Activated CD4-positive, alpha-beta memory T cell treated with anti-CD3 and anti-CD28 coated beads, Interleukin-2, amount 10 ng/mL, durations not matched to agents 7 days and 5 days (primary cell): ENCODE measurements at regions of chr17 and their contacts with region 1.

Region 1: GRCh38 chr17:42997984-42998938 is at the start of gene RPL27:
- DNase-seq: peak; percentile 98
- H3K4me3 Mint-ChIP-seq: peak within 1 kb of the TSS; percentile 94
- H3K27ac Mint-ChIP-seq: peak within 1 kb of the TSS; percentile 96
- H3K4me1 Mint-ChIP-seq: peaks cover 35% of the 10 kb centered on the region
- H3K27me3 Mint-ChIP-seq: no peaks in the 10 kb centered on the region
- total RNA-seq, gene RPL27: 880 to 892 TPM

Region 2: DNA sequence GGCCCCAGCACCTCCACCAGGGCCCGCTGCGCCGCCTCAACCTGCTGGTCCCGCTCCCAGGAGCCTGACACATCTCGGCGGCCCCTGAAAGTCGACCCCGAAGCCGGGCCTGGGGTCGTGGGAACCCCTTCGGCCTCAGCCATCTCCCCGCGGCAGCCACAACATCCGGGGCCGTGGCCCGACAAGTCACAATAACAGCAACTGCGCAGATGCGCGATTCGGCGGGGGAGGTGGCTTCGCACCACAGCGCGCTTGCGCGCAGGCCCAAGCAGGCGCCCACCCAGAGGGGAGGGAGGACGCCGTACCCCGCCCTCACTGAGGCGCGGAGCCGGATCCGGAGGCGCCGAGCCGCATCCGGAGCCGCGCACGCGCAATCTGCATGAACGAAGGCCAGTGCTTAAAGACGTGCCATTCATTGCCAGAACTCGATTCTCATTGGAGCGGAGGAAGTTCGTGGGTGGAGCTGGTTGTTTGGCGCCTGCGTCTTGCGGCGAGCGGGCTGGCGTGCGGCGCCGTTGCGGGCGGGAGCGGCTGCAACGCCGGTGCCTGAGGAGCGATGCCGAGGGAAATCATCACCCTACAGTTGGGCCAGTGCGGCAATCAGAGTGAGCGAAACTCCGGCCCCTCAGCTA is 389.0 kb before region 1 on chr17 and contains the starts of genes RETREG3 and TUBG1:
- CTCF ChIA-PET with region 1: no interaction called
- POLR2A ChIA-PET with region 1: interaction called, 13 read pairs
- DNase-seq: peak; percentile 99
- H3K4me3 Mint-ChIP-seq: peak within 1 kb of the TSS; percentile 99
- H3K27ac Mint-ChIP-seq: peak within 1 kb of the TSS; percentile 91
- H3K4me1 Mint-ChIP-seq: peaks cover 42% of the 10 kb centered on the region
- H3K27me3 Mint-ChIP-seq: no peaks in the 10 kb centered on the region
- total RNA-seq, gene RETREG3: 73.9 to 75.5 TPM
- total RNA-seq, gene TUBG1: 53.3 to 56.3 TPM

Region 3: GRCh38 chr17:42832974-42833766 is 165.1 kb before region 1 on chr17 and contains the start of gene PSME3:
- CTCF ChIA-PET with region 1: interaction called, 7 read pairs
- POLR2A ChIA-PET with region 1: interaction called, 29 read pairs
- DNase-seq: peak; percentile 91
- H3K4me3 Mint-ChIP-seq: peak within 1 kb of the TSS; percentile 89
- H3K27ac Mint-ChIP-seq: peak within 1 kb of the TSS; percentile 92
- H3K4me1 Mint-ChIP-seq: peaks cover 26% of the 10 kb centered on the region
- H3K27me3 Mint-ChIP-seq: peaks cover 9% of the 10 kb centered on the region
- total RNA-seq, gene PSME3: 101 to 104 TPM

Region 4: GRCh38 chr17:43024407-43025289 is 26.4 kb after region 1 on chr17 and contains the start of gene RND2:
- CTCF ChIA-PET with region 1: interaction called, 4 read pairs
- POLR2A ChIA-PET with region 1: interaction called, 22 read pairs
- DNase-seq: peak; percentile 76
- H3K4me3 Mint-ChIP-seq: peak within 1 kb of the TSS; percentile 66
- H3K27ac Mint-ChIP-seq: peak within 1 kb of the TSS; percentile 4
- H3K4me1 Mint-ChIP-seq: peaks cover 24% of the 10 kb centered on the region
- H3K27me3 Mint-ChIP-seq: peaks cover 19% of the 10 kb centered on the region
- total RNA-seq, gene RND2: not detected

Region 5: GRCh38 chr17:43140396-43141332 is 142.4 kb after region 1 on chr17:
- CTCF ChIA-PET with region 1: no interaction called
- POLR2A ChIA-PET with region 1: no interaction called
- DNase-seq: no peak
- H3K4me3 Mint-ChIP-seq: no peak overlapping the region
- H3K27ac Mint-ChIP-seq: no peak overlapping the region
- H3K4me1 Mint-ChIP-seq: peaks cover 10% of the 10 kb centered on the region
- H3K27me3 Mint-ChIP-seq: no peaks in the 10 kb centered on the region

Region 6: DNA sequence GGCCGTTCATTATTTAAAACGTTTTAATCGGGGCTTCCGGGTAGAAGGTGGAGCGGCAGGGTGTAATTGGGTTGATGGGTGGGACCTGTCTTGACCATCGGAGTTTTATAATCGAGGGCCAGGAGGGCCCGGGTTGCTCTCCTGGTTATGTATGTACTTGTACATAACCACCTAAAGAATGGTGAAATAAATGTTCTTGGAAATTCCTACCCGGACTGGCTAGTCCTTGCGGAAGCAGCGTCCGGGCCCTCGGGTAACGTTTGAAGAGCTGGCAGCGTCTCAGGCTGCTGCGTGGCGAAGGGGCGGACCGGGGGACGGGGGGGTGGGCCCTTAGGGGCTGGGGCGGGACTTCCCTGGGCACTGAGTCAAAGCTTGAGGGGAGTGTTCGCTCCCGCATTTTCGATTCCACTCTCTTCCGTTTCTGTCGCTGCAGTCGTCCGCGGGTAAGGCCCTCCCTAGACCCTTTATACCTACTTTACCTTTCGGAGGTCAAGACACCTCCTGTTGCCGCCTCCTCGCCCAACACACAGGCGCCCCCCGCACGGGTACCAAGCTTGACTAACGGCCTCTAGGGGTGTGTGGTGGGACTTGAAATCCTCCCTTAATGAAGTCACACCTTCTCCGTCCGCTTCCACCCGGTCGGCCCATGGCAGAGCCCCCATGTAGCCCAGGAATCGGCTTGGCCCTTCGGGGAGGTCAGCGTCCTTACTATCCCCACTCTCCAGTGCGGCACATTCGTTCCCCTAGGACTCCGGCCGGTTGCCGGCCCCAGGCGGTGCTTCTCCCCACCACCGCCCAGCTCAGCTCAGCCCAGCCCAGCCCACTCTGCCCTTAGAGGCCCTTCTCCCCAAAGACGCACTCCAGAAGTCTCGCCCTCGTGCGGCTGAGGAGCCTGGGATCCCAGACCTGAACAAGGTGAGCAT is 213.5 kb after region 1 on chr17 and contains the start of gene TMEM106A:
- CTCF ChIA-PET with region 1: interaction called, 4 read pairs
- POLR2A ChIA-PET with region 1: interaction called, 12 read pairs
- DNase-seq: peak; percentile 80
- H3K4me3 Mint-ChIP-seq: peak within 1 kb of the TSS; percentile 81
- H3K27ac Mint-ChIP-seq: peak within 1 kb of the TSS; percentile 82
- H3K4me1 Mint-ChIP-seq: peaks cover 31% of the 10 kb centered on the region
- H3K27me3 Mint-ChIP-seq: no peaks in the 10 kb centered on the region
- total RNA-seq, gene TMEM106A: 12.9 to 13.8 TPM

Region 7: DNA sequence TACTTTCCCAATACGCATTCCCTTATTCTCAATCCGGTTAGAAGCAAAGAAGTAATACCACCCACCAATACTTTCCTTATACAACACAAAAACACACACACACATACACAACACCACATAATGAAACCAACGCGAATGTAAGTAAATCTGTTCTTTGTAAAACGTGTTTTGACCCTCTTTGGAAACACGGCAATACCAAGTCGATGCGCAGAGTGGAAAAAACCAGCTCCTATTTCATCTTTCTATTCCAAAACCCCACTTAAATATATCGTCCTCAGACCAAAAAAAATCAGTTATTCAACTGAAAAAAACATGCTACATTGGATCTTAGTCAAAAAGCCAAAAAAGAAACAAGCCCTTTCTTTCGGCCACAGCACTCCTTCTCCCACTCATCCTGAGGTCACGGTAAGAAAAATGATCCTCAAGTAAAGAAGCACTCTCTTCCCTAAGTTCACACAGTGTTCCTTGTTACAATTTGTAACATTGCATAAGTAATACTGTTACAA is 369.5 kb after region 1 on chr17:
- CTCF ChIA-PET with region 1: no interaction called
- POLR2A ChIA-PET with region 1: interaction called, 25 read pairs
- DNase-seq: peak; percentile 57
- H3K4me3 Mint-ChIP-seq: peak overlapping the region; percentile 86
- H3K27ac Mint-ChIP-seq: peak overlapping the region; percentile 99
- H3K4me1 Mint-ChIP-seq: peaks cover 52% of the 10 kb centered on the region
- H3K27me3 Mint-ChIP-seq: no peaks in the 10 kb centered on the region